ENCODE measurements at regions of chr6 and their contacts with region 1.

Region 1: GRCh38 chr6:30102970-30103874 is 9.7 kb downstream of the TRIM31 start:
- DNase-seq: peak; percentile 63 to 92 (median 78)
- ATAC-seq: peak; percentile 83 to 90 (median 86)
- H3K4me3 ChIP-seq: peak overlapping the region; percentile 51 to 86
- H3K4me3 Mint-ChIP-seq: peak overlapping the region; percentile 82 to 86 (median 84)
- H3K27ac ChIP-seq: peak overlapping the region; percentile 21
- H3K27ac Mint-ChIP-seq: peak overlapping the region; percentile 63 to 77
- H3K4me1 ChIP-seq: peaks cover 31 to 40% of the 10 kb centered on the region in 2 experiments
- H3K4me1 Mint-ChIP-seq: peaks cover 38 to 47% (median 42%) of the 10 kb centered on the region in 3 donors
- H3K27me3 ChIP-seq: peaks cover 17 to 49% of the 10 kb centered on the region in 2 experiments
- H3K27me3 Mint-ChIP-seq: peaks cover 28 to 48% of the 10 kb centered on the region in 2 donors

Region 2: GRCh38 chr6:30130887-30131862 is 28.0 kb after region 1 on chr6:
- CTCF ChIA-PET with region 1: interaction called, 4 to 115 read pairs
- POLR2A ChIA-PET with region 1: interaction called in 1 of 2 experiments, 3 read pairs
- DNase-seq: peak; percentile 38 to 92 (median 61)
- ATAC-seq: peak; percentile 92 to 95 (median 94)
- H3K4me3 ChIP-seq: no peak overlapping the region
- H3K4me3 Mint-ChIP-seq: peak overlapping the region in 1 of 3 donors; percentile 32
- H3K27ac ChIP-seq: no peak overlapping the region
- H3K27ac Mint-ChIP-seq: no peak overlapping the region
- H3K4me1 ChIP-seq: peaks cover 0 to 7% of the 10 kb centered on the region in 2 experiments
- H3K4me1 Mint-ChIP-seq: peaks cover 7 to 11% (median 9%) of the 10 kb centered on the region in 3 donors
- H3K27me3 ChIP-seq: peaks cover 6 to 33% of the 10 kb centered on the region in 2 experiments
- H3K27me3 Mint-ChIP-seq: peaks cover 56 to 73% of the 10 kb centered on the region in 2 donors

Region 3: DNA sequence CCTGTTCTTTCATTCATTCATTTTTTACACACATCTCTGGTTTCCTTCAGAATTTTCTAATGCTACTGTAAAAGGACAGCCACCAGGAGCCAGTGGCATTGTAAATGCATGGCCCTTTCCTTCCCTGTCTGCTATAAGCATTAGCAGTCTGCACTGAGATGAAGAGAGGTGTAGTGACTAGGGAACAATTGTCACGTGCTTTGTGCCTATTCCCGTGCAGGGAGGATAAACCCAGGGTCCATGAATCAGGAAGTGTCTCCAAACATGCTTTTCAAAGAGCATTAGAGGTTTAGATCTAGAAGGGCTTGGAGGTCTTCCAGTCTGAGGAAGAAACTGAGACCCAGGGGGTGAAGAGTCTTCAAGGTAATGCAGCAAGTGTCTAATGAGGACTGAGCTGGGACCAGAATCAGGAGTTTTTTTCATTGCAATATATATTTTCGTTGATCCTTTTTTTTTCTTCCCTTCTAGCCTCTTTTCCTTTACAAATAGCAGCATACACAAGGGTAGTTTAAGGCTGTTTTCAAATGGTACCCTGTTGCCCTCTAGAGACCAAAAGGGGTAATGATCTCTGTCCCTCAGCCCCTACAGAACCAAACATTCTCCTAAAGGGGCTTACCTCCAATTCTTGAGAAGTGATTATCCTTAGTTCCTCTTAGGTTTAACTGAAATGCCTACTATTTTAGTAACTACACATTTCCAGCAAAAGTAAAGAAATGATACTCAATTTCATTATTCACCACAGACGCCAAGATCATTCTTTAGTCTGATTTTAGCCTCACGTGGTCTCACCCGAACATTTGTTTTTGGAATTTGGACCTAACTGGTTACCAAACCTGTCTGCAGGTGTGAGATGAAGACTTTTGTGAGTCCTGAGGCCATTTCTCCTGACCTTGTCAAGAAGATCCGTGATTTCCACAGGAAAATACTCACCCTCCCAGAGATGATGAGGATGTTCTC is 66.7 kb after region 1 on chr6:
- CTCF ChIA-PET with region 1: interaction called in 1 of 2 experiments, 10 read pairs
- POLR2A ChIA-PET with region 1: no interaction called
- DNase-seq: peak in 2 of 35 experiments; percentile 21 to 67
- ATAC-seq: peak; percentile 77 to 84 (median 80)
- H3K4me3 ChIP-seq: no peak overlapping the region
- H3K4me3 Mint-ChIP-seq: no peak overlapping the region
- H3K27ac ChIP-seq: no peak overlapping the region
- H3K27ac Mint-ChIP-seq: no peak overlapping the region
- H3K4me1 ChIP-seq: peaks cover 0 to 11% of the 10 kb centered on the region in 2 experiments
- H3K4me1 Mint-ChIP-seq: peaks cover 0 to 15% (median 5%) of the 10 kb centered on the region in 3 donors
- H3K27me3 ChIP-seq: peaks cover 10 to 33% of the 10 kb centered on the region in 2 experiments
- H3K27me3 Mint-ChIP-seq: peaks cover 41 to 53% of the 10 kb centered on the region in 2 donors

Region 4: DNA sequence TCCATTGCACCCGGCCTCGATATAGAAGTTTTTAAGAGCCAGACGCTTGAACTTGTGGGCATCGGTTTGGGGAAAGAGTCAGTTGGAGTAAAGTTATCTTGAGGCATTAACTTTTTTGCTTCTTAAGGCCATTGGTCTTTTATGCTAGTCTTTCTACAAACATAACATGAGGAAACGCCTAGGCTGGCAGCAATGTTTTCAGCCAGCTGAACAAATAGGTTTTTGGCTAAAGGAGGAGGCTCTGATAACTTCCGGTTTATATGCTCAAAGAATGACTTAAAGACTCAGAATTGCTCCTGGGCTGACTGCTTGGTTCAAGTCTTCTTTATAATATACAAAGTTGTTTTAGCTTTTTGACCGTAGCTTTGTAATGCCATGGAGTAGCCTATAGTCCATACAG is 1122.5 kb after region 1 on chr6:
- CTCF ChIA-PET with region 1: no interaction called
- POLR2A ChIA-PET with region 1: no interaction called
- DNase-seq: no peak
- ATAC-seq: no peak
- H3K4me3 ChIP-seq: no peak overlapping the region
- H3K4me3 Mint-ChIP-seq: no peak overlapping the region
- H3K27ac ChIP-seq: no peak overlapping the region
- H3K27ac Mint-ChIP-seq: no peak overlapping the region
- H3K4me1 ChIP-seq: no peaks in the 10 kb centered on the region
- H3K4me1 Mint-ChIP-seq: peaks cover 0 to 1% (median 0%) of the 10 kb centered on the region in 3 donors
- H3K27me3 ChIP-seq: peaks cover 0 to 4% of the 10 kb centered on the region in 2 experiments
- H3K27me3 Mint-ChIP-seq: peaks cover 7 to 11% of the 10 kb centered on the region in 2 donors